ENCODE measurements at regions of chr9 and their contacts with region 1.

Region 1: GRCh38 chr9:121321016-121321503 is 49.0 kb downstream of the STOM start:
- DNase-seq: peak; percentile 28
- H3K4me3 Mint-ChIP-seq: no peak overlapping the region
- H3K27ac Mint-ChIP-seq: no peak overlapping the region
- H3K4me1 Mint-ChIP-seq: peaks cover 29% of the 10 kb centered on the region
- H3K27me3 Mint-ChIP-seq: no peaks in the 10 kb centered on the region

Region 2: GRCh38 chr9:121246821-121247561 is 74.1 kb before region 1 on chr9:
- CTCF ChIA-PET with region 1: no interaction called
- POLR2A ChIA-PET with region 1: no interaction called
- DNase-seq: no peak
- H3K4me3 Mint-ChIP-seq: no peak overlapping the region
- H3K27ac Mint-ChIP-seq: no peak overlapping the region
- H3K4me1 Mint-ChIP-seq: no peaks in the 10 kb centered on the region
- H3K27me3 Mint-ChIP-seq: no peaks in the 10 kb centered on the region

Region 3: GRCh38 chr9:121308765-121309164 is 12.3 kb before region 1 on chr9:
- CTCF ChIA-PET with region 1: interaction called, 11 read pairs
- POLR2A ChIA-PET with region 1: no interaction called
- DNase-seq: no peak
- H3K4me3 Mint-ChIP-seq: no peak overlapping the region
- H3K27ac Mint-ChIP-seq: no peak overlapping the region
- H3K4me1 Mint-ChIP-seq: no peaks in the 10 kb centered on the region
- H3K27me3 Mint-ChIP-seq: no peaks in the 10 kb centered on the region

Region 4: GRCh38 chr9:121376214-121376830 is 55.3 kb after region 1 on chr9:
- CTCF ChIA-PET with region 1: interaction called, 26 read pairs
- POLR2A ChIA-PET with region 1: no interaction called
- DNase-seq: no peak
- H3K4me3 Mint-ChIP-seq: no peak overlapping the region
- H3K27ac Mint-ChIP-seq: no peak overlapping the region
- H3K4me1 Mint-ChIP-seq: peaks cover 4% of the 10 kb centered on the region
- H3K27me3 Mint-ChIP-seq: peaks cover 8% of the 10 kb centered on the region

Region 5: DNA sequence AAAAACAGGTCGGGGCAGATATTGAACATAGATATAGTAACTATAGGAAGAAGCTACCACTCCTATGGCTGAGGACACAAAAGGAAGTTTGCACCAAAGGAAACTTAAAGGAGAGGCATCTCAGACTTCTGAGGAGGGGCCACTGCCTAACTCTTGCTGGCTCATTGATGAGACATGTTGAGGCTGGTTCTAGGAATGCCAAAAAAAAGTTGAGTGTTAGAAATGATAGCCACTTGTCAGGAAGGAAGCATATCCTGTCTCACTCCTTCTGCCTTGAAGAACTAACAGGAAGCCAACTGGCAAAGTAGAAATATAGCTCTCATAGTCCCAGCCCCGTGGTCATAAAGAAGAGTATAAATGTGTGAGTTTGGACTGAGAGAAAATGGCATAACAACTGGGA is 72.3 kb after region 1 on chr9:
- CTCF ChIA-PET with region 1: interaction called, 108 read pairs
- POLR2A ChIA-PET with region 1: no interaction called
- DNase-seq: no peak
- H3K4me3 Mint-ChIP-seq: no peak overlapping the region
- H3K27ac Mint-ChIP-seq: no peak overlapping the region
- H3K4me1 Mint-ChIP-seq: peaks cover 22% of the 10 kb centered on the region
- H3K27me3 Mint-ChIP-seq: peaks cover 9% of the 10 kb centered on the region

Region 6: GRCh38 chr9:121640076-121640475 is 319.0 kb after region 1 on chr9:
- CTCF ChIA-PET with region 1: no interaction called
- POLR2A ChIA-PET with region 1: no interaction called
- DNase-seq: peak; percentile 28
- H3K4me3 Mint-ChIP-seq: no peak overlapping the region
- H3K27ac Mint-ChIP-seq: no peak overlapping the region
- H3K4me1 Mint-ChIP-seq: no peaks in the 10 kb centered on the region
- H3K27me3 Mint-ChIP-seq: peaks cover 2% of the 10 kb centered on the region

Measured in activated CD4-positive, alpha-beta T cell treated with anti-CD3 and anti-CD28 coated beads, Interleukin-2, amount 10 ng/mL, durations not matched to agents 7 days and 5 days (primary cell).